ENCODE measurements at regions of chr12 and their contacts with region 1.

Region 1: DNA sequence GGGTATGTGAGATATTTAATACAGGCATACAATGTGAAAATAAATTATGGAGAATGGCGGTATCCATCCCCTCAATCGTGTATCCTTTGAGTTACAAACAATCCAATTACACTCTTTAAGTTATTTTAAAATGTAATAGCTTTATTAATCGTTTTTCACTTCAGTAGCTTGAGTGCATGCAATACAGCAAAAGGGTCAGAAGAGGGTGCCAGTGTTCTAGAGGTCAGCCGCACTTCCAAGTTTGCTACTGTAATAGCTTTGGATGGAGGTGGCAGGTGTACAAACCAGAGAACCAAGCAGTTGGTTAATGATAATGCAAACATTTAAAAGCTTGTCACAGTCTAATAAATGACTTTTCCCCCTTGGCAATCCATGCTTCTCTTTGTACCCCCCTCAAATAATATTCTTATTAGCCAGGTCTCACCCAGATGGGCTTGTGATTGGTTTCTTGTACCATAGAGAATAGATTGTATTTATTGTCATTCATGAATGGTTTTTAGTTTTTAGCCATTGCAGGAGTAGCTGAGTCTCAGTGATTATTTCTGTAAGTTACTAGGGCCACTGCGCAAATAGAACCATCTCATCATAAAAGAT is 127.0 kb downstream of the ERC1 start:
- DNase-seq: peak; percentile 50
- ATAC-seq: peak; percentile 86

Region 2: GRCh38 chr12:1157046-1157445 is 39.0 kb after region 1 on chr12:
- intact Hi-C with region 1: no loop called
- DNase-seq: no peak
- ATAC-seq: no peak

Region 3: GRCh38 chr12:1262011-1262410 is 143.9 kb after region 1 on chr12:
- intact Hi-C with region 1: loop called (anchors 10 kb)
- DNase-seq: no peak
- ATAC-seq: no peak

Region 4: GRCh38 chr12:1583421-1584078 is 465.5 kb after region 1 on chr12:
- intact Hi-C with region 1: loop called (anchors 2 kb)
- DNase-seq: no peak
- ATAC-seq: peak; percentile 90

Measured in Right ventricle myocardium superior (tissue), 1 donor.